A673 (cell line): ENCODE measurements at regions of chr7 and their contacts with region 1.

Region 1: GRCh38 chr7:128209229-128210035 is 31.6 kb upstream of the LEP start:
- DNase-seq: peak; percentile 87
- H3K4me3 ChIP-seq: no peak overlapping the region
- H3K27ac ChIP-seq: no peak overlapping the region
- H3K4me1 ChIP-seq: no peaks in the 10 kb centered on the region
- H3K27me3 ChIP-seq: peaks cover 3% of the 10 kb centered on the region
- CTCF ChIP-seq: peak; percentile 97

Region 2: DNA sequence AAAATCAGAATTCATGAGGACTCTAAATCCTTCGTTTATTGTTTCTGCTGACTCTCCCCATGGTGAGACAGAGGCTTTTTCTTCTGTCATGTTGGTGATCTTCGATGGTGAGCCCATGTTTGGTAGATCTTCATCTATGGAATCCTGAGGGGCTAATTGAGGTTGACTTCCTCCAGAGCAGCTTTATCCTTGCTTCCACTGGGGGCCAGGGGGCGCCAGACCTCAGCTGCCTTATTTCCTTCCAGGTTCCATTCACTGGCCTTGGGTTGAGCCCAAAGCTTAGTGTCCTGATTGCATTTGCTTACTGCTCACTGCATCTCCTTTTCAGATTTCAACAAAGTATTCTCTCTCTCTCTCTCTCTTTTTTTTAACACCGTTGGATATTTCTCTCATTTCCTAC is 704.7 kb before region 1 on chr7:
- CTCF ChIA-PET with region 1: interaction called, 7 read pairs
- POLR2A ChIA-PET with region 1: no interaction called
- intact Hi-C with region 1: loop called (anchors 5 kb)
- DNase-seq: peak; percentile 44
- H3K4me3 ChIP-seq: no peak overlapping the region
- H3K27ac ChIP-seq: no peak overlapping the region
- H3K4me1 ChIP-seq: no peaks in the 10 kb centered on the region
- H3K27me3 ChIP-seq: peaks cover 7% of the 10 kb centered on the region
- CTCF ChIP-seq: peak; percentile 60

Region 3: DNA sequence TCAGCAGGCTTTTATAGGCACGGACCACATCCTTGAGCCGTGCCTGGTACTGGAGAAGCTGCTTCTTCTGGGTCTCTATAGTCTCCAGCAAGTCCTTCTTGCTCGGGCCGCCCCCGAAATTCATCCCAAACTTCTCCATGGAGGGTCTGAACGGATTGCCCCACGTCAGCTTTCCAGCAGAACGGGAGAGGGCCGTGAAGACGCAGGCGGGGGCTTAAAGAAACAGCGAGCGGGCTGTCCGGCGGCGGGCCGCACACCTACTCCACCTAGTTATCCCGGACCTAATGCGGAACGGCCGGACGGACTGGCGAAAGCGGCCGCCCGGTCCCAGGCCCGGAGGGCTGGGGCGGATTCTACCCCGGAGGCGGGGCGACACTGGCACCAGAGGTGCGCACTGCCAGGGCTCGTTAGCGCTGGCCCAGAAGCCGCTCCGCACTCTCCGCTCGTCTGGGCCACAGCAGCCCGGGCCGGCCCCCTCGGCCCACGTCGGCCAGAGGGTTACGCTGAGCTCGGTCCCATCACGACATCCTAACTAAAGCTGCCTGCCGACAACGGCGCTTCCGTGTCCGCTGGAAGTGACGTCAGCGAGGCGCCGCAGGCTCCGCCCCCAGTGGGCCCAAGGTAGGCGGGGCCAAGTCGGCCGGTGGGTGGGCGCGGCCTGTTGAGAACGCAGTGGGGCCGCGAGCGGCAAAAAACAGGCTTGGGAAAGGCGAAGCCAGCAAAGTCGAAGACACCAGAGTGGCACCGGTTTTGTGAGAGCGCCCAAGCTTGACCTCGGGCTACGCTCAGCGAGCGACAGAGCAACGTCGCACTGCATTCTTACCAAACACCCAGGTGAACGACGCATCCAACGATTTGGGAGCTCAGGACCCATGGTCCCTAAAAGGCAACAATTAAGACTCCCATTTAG is 624.1 kb before region 1 on chr7 and contains the start of gene GCC1:
- CTCF ChIA-PET with region 1: interaction called, 3 read pairs
- POLR2A ChIA-PET with region 1: no interaction called
- intact Hi-C with region 1: loop called (anchors 5 kb)
- DNase-seq: peak; percentile 91
- H3K4me3 ChIP-seq: peak within 1 kb of the TSS; percentile 90
- H3K27ac ChIP-seq: peak within 1 kb of the TSS; percentile 74
- H3K4me1 ChIP-seq: peaks cover 17% of the 10 kb centered on the region
- H3K27me3 ChIP-seq: no peaks in the 10 kb centered on the region
- CTCF ChIP-seq: no peak
- total RNA-seq, gene GCC1: 15.2 and 15.5 TPM in 2 replicates

Region 4: GRCh38 chr7:127708788-127709187 is 500.6 kb before region 1 on chr7:
- CTCF ChIA-PET with region 1: interaction called, 23 read pairs
- POLR2A ChIA-PET with region 1: no interaction called
- intact Hi-C with region 1: loop called (anchors 1 kb)
- DNase-seq: peak; percentile 79
- H3K4me3 ChIP-seq: no peak overlapping the region
- H3K27ac ChIP-seq: no peak overlapping the region
- H3K4me1 ChIP-seq: no peaks in the 10 kb centered on the region
- H3K27me3 ChIP-seq: no peaks in the 10 kb centered on the region
- CTCF ChIP-seq: peak; percentile 76

Region 5: GRCh38 chr7:127959770-127960169 is 249.7 kb before region 1 on chr7:
- CTCF ChIA-PET with region 1: no interaction called
- POLR2A ChIA-PET with region 1: no interaction called
- intact Hi-C with region 1: no loop called
- DNase-seq: no peak
- H3K4me3 ChIP-seq: no peak overlapping the region
- H3K27ac ChIP-seq: no peak overlapping the region
- H3K4me1 ChIP-seq: no peaks in the 10 kb centered on the region
- H3K27me3 ChIP-seq: no peaks in the 10 kb centered on the region
- CTCF ChIP-seq: no peak

Region 6: GRCh38 chr7:128035712-128036111 is 173.7 kb before region 1 on chr7:
- CTCF ChIA-PET with region 1: interaction called, 9 read pairs
- POLR2A ChIA-PET with region 1: no interaction called
- intact Hi-C with region 1: loop called (anchors 2 kb)
- DNase-seq: peak; percentile 55
- H3K4me3 ChIP-seq: no peak overlapping the region
- H3K27ac ChIP-seq: no peak overlapping the region
- H3K4me1 ChIP-seq: no peaks in the 10 kb centered on the region
- H3K27me3 ChIP-seq: no peaks in the 10 kb centered on the region
- CTCF ChIP-seq: peak; percentile 63

Region 7: DNA sequence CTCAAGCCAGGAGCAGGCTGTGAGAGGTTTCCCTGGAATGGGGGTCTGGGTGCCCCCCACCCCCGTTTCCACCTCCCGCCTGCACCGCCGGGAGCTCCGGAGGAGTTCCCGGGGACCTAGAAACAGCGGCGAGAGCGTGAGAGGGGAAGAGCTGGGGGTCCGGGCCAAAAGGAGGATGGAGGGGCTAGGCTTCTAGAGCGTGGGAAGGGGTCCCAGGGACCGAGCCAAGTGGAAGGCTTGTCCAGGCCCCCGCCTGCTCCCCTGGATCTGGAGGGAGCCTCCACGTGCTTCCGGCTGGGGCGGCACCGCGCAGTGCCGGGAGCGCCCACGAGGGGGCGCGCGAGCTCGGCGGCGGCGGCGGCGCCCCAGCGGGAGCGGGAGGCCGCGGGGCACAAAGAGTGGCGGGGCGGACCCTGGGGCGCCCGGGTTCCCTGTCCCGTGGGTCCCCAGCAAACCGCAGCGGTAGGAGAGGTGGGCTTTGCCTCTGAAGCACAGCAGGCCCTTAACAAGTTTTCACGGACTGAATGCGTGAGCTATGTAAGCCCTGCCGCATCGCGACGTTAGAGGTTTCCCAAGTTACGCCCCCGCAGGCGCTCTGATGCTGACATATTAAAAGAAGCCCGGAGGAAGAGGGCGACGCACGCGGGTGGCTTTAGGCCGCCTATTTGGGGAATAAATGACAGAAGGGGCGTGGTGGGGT is 73.8 kb before region 1 on chr7:
- CTCF ChIA-PET with region 1: interaction called, 30 read pairs
- POLR2A ChIA-PET with region 1: no interaction called
- intact Hi-C with region 1: loop called (anchors 2 kb)
- DNase-seq: peak; percentile 79
- H3K4me3 ChIP-seq: peak overlapping the region; percentile 64
- H3K27ac ChIP-seq: peak overlapping the region; percentile 55
- H3K4me1 ChIP-seq: peaks cover 7% of the 10 kb centered on the region
- H3K27me3 ChIP-seq: peaks cover 43% of the 10 kb centered on the region
- CTCF ChIP-seq: peak; percentile 70

Region 8: DNA sequence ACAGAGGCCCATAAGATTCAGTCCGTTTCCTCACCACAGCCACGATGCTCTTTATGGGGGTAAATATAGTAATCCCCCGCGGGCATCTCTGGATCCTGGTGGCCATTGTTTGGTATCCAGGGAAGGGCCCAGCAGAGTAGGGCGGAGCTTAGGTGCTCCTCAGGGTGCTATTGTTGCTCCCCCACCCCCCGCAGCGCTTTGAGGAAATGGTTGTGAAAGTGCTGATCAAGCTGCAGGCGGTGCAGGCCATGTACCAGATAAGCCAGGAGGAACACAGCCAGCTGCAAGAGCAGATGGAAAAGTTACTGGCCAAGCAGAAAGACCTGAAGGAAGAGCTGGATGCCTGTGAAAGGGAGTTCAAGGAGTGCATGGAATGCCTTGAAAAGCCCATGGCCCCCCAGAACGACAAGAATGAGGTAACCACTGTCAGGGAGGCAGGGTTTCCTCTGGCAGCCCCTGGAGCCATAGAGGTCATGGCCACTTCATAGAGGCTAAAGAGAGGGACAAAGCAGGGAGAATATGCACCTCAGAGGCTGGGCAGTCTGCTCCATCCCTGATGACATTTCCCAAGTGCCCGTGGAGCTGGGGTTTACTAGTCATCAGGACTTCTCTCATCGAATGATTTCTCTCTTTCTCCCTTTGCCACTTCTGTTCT is 603.2 kb after region 1 on chr7:
- CTCF ChIA-PET with region 1: no interaction called
- POLR2A ChIA-PET with region 1: no interaction called
- intact Hi-C with region 1: no loop called
- DNase-seq: peak; percentile 92
- H3K4me3 ChIP-seq: no peak overlapping the region
- H3K27ac ChIP-seq: no peak overlapping the region
- H3K4me1 ChIP-seq: peaks cover 18% of the 10 kb centered on the region
- H3K27me3 ChIP-seq: no peaks in the 10 kb centered on the region
- CTCF ChIP-seq: no peak

Region 9: DNA sequence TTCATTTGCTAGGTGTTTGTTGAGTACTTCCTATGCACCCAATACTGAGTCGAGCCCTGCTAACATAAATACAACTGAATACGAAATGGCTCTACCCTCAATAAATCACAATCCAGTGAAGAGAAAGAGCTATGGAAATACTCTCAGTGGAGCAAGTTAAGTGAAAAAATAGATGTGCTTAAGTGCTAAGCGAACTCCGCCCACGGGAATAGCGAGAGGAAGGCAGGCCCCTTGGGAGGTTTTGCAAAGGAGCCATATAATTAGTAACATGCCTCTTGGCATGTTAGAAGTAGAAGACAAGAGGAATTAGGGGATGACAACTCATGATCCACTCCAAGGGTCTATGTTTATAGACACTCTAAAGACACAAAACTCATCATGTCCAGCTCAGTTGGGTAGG is 892.3 kb after region 1 on chr7:
- CTCF ChIA-PET with region 1: no interaction called
- POLR2A ChIA-PET with region 1: no interaction called
- intact Hi-C with region 1: no loop called
- DNase-seq: peak; percentile 86
- H3K4me3 ChIP-seq: no peak overlapping the region
- H3K27ac ChIP-seq: no peak overlapping the region
- H3K4me1 ChIP-seq: peaks cover 18% of the 10 kb centered on the region
- H3K27me3 ChIP-seq: no peaks in the 10 kb centered on the region
- CTCF ChIP-seq: no peak

Region 10: DNA sequence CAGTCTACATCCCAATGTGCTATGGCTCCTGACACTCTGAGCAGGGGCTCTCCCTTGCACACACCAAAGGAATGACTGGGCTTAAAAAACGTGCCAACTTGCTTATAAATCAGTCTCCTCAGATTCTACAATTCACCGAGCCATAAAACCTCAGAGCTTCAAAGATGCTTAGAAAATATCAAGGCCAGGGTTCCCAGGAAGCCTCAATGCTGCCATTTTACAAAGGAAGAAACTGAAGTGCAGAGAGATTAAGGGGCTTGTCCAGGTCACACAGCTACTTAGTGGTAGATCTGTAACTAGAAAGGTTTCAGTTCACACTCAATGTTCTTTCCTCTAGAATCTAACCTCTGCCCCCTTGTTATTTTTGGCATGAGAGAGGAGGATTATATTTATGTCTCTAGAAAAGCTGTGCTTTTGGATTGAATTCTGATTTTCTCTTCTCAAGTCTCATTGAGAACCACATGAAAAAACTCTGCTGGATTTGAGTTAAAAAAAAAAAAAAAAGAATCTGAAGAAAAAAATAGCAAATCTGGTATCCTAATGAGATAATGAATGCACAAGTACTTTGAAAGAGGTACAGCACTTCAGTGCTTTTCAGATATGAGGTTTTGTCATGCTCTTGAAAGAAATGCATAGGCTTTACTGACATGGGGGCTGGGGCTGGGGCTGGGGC is 912.8 kb after region 1 on chr7:
- CTCF ChIA-PET with region 1: no interaction called
- POLR2A ChIA-PET with region 1: no interaction called
- intact Hi-C with region 1: no loop called
- DNase-seq: no peak
- H3K4me3 ChIP-seq: no peak overlapping the region
- H3K27ac ChIP-seq: no peak overlapping the region
- H3K4me1 ChIP-seq: no peaks in the 10 kb centered on the region
- H3K27me3 ChIP-seq: no peaks in the 10 kb centered on the region
- CTCF ChIP-seq: no peak